ENCODE measurements at regions of chr7 and their contacts with region 1.

Region 1: DNA sequence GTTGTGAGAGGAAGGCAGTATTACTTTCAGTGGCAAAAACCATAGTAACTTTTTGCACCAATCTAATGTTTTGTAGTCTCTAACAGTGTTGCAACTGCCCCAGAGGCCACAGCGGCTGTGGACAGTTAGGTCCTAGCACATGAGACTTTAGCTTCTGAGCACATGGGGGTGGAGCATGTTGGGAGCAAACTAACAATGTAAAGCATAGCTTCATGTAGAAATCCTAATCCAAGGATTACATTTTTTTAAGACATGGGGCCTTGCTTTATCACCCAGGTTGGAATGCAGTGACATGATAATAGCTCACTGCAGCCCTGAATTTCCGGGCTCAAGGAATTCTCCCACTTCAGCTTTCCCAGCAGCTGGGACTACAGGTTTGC is 49.0 kb downstream of the LAMB1 start:
- DNase-seq: no peak
- ATAC-seq: no peak
- H3K4me3 ChIP-seq: no peak overlapping the region
- H3K27ac ChIP-seq: peak overlapping the region in 1 of 2 experiments; percentile 77; a peak in 2 of 6 replicates
- H3K4me1 ChIP-seq: peaks cover 56% of the 10 kb centered on the region
- CTCF ChIP-seq: no peak
- EP300 ChIP-seq: no peak
- POLR2A ChIP-seq: no peak
- RAD21 ChIP-seq: no peak

Region 2: GRCh38 chr7:107964510-107964909 is 10.6 kb after region 1 on chr7:
- CTCF ChIA-PET with region 1: interaction called, 12 read pairs
- POLR2A ChIA-PET with region 1: no interaction called
- DNase-seq: no peak
- ATAC-seq: no peak
- H3K4me3 ChIP-seq: no peak overlapping the region
- H3K27ac ChIP-seq: no peak overlapping the region
- H3K4me1 ChIP-seq: peaks cover 23% of the 10 kb centered on the region
- CTCF ChIP-seq: no peak
- EP300 ChIP-seq: no peak
- POLR2A ChIP-seq: no peak
- RAD21 ChIP-seq: no peak